AG04449 (cell line): ENCODE measurements at regions of chr2 and their contacts with region 1.

Region 1: DNA sequence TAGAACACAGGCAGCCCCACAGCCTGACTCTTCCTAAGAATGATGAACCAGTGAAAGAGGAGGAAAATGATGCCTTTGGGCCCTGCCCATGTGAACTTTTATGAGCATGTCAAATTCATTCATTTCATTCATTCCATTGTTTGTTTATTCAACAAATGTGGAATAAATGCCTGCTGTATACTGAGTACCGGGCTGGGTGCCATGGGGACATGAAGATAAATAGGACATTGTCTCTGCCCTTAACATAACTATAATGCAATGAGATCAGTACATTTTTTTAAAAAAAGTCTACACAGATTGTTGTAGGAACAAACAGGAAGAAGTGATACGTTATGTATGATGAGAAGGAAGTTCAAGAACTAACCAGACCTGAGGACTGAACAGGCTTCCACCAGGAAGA is 14.7 kb downstream of the MREG start:
- DNase-seq: no peak
- H3K4me3 ChIP-seq: no peak overlapping the region
- CTCF ChIP-seq: no peak

Region 2: DNA sequence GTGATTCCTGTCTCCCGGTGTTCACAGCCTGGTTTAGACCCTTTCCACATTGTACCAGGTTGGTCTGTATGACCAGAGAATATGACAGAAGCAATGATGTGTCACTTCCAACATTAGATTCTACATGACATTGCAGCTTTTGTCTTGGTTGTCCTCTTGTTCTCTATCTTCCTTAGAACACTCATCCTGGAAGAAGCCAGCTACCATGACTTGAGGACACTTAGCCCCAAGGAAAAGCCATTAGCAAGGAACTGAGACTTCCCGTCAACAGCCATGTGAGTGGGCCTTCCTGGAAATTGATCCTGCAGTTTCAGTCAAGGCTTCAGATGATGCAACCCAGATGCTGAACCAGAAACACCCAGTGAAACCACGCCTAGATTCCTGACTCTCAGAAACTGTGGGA is 128.5 kb before region 1 on chr2:
- CTCF ChIA-PET with region 1: no interaction called
- POLR2A ChIA-PET with region 1: no interaction called
- DNase-seq: no peak
- H3K4me3 ChIP-seq: no peak overlapping the region
- CTCF ChIP-seq: no peak

Region 3: GRCh38 chr2:215985257-215985656 is 13.4 kb before region 1 on chr2:
- CTCF ChIA-PET with region 1: interaction called, 10 read pairs
- POLR2A ChIA-PET with region 1: no interaction called
- DNase-seq: no peak
- H3K4me3 ChIP-seq: no peak overlapping the region
- CTCF ChIP-seq: no peak

Region 4: DNA sequence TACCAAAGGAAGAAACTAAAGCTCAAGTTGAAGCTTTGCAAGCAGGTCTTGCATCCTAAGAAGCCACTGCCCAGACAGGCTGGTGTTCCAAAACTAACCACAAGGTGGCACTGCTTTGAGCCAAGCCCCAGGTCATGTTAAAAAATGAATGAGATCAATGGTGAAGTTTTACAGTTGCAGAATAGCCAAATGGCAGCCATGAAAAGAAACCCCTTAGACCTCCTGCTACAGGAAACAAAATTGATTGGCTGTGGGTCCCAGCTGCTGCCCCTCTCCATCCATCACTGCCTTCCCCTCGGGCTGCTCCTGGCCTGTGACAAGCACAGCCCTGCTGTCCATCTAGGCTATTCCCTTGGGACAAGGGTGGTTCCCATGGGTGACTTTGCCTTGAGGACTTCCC is 35.4 kb after region 1 on chr2:
- CTCF ChIA-PET with region 1: no interaction called
- POLR2A ChIA-PET with region 1: no interaction called
- DNase-seq: no peak
- H3K4me3 ChIP-seq: no peak overlapping the region
- CTCF ChIP-seq: peak; percentile 75

Region 5: DNA sequence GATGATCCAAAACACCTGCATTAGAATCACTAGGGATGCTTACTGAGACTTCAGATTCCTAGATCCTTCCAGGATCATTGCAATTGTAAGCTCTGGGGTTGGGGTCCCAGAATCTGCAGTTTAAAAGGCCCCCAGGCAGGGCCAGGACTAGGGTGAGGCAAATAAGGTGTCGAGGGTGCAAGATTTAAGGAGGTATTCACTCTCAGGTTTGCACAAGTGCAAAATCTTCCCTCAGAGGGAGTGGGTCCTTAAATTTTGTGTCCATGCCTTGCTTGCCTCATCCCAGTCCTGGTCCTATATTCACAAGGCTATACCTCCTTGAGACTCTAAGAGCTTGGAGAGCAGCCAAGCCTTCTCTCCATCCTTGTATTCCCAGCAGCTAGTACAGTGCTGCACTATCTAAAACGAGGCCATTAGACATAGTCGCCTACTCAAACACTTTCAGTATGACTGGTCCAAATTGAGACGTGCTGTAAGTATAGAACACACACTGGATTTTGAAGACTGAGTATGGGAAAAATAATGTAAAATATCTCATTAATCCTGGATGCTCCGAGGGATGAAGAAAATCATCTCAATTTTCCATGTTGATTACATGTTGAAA is 46.3 kb after region 1 on chr2:
- CTCF ChIA-PET with region 1: no interaction called
- POLR2A ChIA-PET with region 1: no interaction called
- DNase-seq: no peak
- H3K4me3 ChIP-seq: no peak overlapping the region
- CTCF ChIP-seq: no peak